Activated T-helper 1 cell treated with anti-CD3 and anti-CD28 coated beads, Interleukin-12 subunit alpha, Interleukin-12 subunit beta, Interleukin-2, Interleukin-4 antibody, amounts not matched to agents 30 ng/mL and 10 ng/mL and 1 ng/mL, durations not matched to agents 14 hours and 24 hours and 36 hours (primary cell): ENCODE measurements at regions of chr2 and their contacts with region 1.

Region 1: DNA sequence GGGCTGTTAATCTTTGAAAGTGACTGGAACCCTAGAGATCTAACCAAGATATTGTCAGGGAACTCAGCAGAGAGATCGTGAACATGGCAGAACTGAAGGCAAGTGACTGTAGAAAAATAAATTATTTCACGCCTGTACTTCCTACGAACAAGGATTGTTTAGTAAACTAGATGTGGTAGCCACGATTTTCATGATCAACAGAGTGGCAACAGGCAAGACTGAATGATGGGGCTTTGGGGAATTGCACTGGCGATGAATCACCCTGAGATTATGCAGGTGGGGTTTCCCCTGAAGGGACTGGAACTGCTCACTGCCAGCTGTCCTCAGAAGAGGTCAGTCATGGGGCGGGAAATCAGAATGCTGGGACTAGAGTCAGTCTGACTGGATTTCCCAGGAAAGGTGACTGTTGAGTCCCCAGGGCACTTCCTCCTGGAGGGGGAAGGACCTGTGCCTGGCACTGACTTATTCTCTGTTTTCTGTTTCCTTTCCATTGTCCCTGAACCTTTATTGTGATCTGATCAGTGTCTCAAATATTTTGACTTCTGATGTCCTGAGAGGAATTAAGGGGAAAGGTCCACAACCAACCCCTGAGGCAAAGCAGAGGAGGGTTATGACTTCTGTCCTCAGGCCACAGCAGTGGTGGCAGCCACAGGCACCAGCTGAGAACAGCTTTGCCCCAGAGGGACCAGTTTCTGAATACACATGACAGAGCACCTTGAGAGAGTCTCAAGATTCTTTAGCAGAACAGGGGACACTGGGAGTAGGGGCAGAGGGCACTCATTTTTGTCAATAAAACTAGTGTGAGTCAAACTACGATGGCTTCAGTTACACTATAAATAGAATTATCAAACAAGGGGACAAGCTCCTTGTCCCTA is 70.0 kb downstream of the NAB1 start:
- DNase-seq: peak; percentile 16
- H3K4me3 Mint-ChIP-seq: peak overlapping the region; percentile 43
- H3K27ac Mint-ChIP-seq: peak overlapping the region; percentile 81
- H3K4me1 Mint-ChIP-seq: peaks cover 64% of the 10 kb centered on the region
- H3K27me3 Mint-ChIP-seq: no peaks in the 10 kb centered on the region

Region 2: GRCh38 chr2:190534310-190535120 is 184.4 kb before region 1 on chr2 and contains the start of gene NEMP2:
- intact Hi-C with region 1: loop called (anchors 1 kb)
- DNase-seq: peak; percentile 82
- H3K4me3 Mint-ChIP-seq: peak within 1 kb of the TSS; percentile 95
- H3K27ac Mint-ChIP-seq: peak within 1 kb of the TSS; percentile 99
- H3K4me1 Mint-ChIP-seq: peaks cover 57% of the 10 kb centered on the region
- H3K27me3 Mint-ChIP-seq: no peaks in the 10 kb centered on the region
- total RNA-seq, gene NEMP2: 11.7 and 13.6 TPM in 2 replicates

Region 3: DNA sequence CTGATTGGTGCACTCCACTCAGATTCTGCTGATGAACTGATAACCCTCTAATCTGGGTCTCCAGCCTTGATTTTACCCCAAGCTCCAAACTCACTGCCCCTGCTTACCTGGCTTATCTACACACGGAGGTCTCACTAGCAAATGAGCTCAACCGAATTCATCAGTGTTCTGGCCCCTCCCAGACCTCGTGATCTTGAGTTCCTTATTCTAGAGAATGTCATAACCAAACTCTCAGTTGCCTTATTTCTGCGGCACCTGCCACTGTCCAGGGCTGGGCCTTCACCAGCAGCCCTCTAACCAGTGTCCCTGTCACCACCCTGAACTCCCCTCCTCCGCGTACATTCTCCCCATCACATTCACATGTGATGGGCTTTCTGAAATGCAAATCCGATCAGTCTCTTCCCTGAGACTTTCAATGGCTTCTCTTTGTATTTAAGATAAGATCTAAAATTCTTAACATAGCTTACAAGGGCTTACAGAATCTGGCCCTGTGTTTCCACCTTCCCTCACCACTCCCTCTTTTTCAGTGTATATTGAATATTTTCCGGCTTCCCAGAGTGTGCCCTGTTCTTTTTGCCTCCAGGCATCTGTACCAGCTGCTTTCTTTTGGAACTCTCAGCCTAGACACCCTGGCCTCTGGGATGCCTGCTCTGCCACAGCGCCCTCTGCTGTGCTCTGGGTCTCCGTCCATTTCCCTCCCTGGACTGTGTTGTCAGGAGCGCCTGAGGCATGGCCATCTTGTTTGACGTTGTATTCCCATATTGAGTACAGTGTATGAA is 38.9 kb before region 1 on chr2:
- intact Hi-C with region 1: loop called (anchors 1 kb)
- DNase-seq: peak; percentile 27
- H3K4me3 Mint-ChIP-seq: peak overlapping the region; percentile 69
- H3K27ac Mint-ChIP-seq: peak overlapping the region; percentile 87
- H3K4me1 Mint-ChIP-seq: peaks cover 53% of the 10 kb centered on the region
- H3K27me3 Mint-ChIP-seq: no peaks in the 10 kb centered on the region

Region 4: DNA sequence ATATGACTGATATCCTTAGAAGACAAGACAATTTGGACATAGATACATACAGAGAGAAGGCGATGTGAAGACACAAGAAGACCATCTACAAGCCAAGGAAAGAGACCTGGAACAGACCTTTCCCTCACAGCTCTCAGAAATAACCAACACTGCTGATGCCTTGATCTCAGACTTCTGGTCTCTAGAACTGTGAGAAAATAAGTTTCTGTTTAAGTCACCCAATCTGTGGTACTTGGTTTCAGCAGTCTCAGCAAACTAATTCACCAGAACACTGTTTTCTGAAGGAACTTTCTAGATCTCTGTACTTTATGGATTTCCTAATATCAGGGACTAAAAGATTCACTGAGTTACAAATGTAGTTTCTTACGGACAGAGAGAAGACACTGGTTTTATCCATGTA is 11.2 kb before region 1 on chr2:
- intact Hi-C with region 1: loop called (anchors 1 kb)
- DNase-seq: no peak
- H3K4me3 Mint-ChIP-seq: no peak overlapping the region
- H3K27ac Mint-ChIP-seq: peak overlapping the region; percentile 40
- H3K4me1 Mint-ChIP-seq: peaks cover 19% of the 10 kb centered on the region
- H3K27me3 Mint-ChIP-seq: no peaks in the 10 kb centered on the region

Region 5: DNA sequence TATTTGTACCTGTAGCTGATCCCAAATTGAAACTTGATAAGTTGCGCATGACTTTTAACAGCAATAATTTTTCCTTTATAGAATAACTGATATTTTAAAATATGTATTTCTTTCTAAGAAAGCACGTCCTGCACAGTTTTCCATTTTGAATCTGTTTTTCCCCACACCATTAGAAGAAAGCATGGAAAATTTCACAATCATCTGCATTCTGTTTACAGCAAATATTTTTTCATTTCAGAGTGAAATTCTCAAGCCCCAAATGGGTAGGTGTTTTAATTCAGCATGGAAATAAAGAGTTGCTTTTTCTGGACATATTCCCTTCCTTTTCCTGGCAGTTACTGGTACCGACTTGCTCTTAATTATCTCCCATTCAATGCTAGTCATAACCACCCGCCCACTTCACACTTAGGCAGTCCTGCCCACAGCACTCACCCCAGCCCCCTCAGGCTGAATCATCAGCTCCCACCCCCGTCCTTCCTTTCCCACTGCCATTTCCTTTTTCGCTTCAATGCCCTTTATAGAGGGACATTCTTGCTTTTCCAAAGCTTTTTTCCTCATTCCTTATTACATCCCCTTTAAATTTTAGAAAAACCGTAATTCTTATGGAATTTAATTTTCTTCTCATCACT is 72.6 kb after region 1 on chr2:
- intact Hi-C with region 1: loop called (anchors 2 kb)
- DNase-seq: no peak
- H3K4me3 Mint-ChIP-seq: peak overlapping the region; percentile 19
- H3K27ac Mint-ChIP-seq: peak overlapping the region; percentile 74
- H3K4me1 Mint-ChIP-seq: peaks cover 76% of the 10 kb centered on the region
- H3K27me3 Mint-ChIP-seq: no peaks in the 10 kb centered on the region

Region 6: DNA sequence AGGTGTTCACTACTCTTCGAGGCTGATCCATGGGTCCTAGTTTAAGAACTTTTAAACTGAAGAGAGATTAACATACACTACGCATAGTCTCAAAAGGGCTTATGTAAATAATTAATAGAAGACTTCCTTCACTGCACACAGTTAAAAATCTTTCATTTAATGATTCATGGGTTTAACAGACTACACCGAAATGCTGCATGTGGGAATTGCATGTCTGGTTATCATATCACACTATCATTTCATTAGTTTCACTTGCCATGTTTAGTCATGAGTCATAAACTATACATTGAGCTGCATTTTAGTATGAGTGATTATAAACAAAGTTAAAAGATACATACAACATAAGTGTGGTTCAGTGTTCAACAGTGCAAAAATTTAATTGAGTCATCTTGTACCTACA is 192.9 kb after region 1 on chr2:
- intact Hi-C with region 1: loop called (anchors 2 kb)
- DNase-seq: no peak
- H3K4me3 Mint-ChIP-seq: no peak overlapping the region
- H3K27ac Mint-ChIP-seq: peak overlapping the region; percentile 76
- H3K4me1 Mint-ChIP-seq: peaks cover 29% of the 10 kb centered on the region
- H3K27me3 Mint-ChIP-seq: no peaks in the 10 kb centered on the region

Region 7: GRCh38 chr2:191189112-191189635 is 470.3 kb after region 1 on chr2:
- intact Hi-C with region 1: loop called (anchors 1 kb)
- DNase-seq: no peak
- H3K4me3 Mint-ChIP-seq: no peak overlapping the region
- H3K27ac Mint-ChIP-seq: no peak overlapping the region
- H3K4me1 Mint-ChIP-seq: peaks cover 56% of the 10 kb centered on the region
- H3K27me3 Mint-ChIP-seq: no peaks in the 10 kb centered on the region